ENCODE measurements at regions of chr6 and their contacts with region 1.

Region 1: GRCh38 chr6:30730601-30731435 is 10.7 kb downstream of the TUBB start:
- DNase-seq: peak; percentile 88
- H3K4me3 ChIP-seq: no peak overlapping the region
- H3K27ac ChIP-seq: no peak overlapping the region
- H3K4me1 ChIP-seq: peaks cover 5% of the 10 kb centered on the region
- H3K27me3 ChIP-seq: no peaks in the 10 kb centered on the region
- CTCF ChIP-seq: peak; percentile 81 to 95

Region 2: GRCh38 chr6:30664994-30665767 is 65.6 kb before region 1 on chr6:
- CTCF ChIA-PET with region 1: no interaction called
- dilution Hi-C with region 1: loop called (anchors 5 kb)
- in situ Hi-C with region 1: no loop called
- intact Hi-C with region 1: no loop called
- DNase-seq: no peak
- H3K4me3 ChIP-seq: no peak overlapping the region
- H3K27ac ChIP-seq: no peak overlapping the region
- H3K4me1 ChIP-seq: no peaks in the 10 kb centered on the region
- H3K27me3 ChIP-seq: no peaks in the 10 kb centered on the region
- CTCF ChIP-seq: no peak

Region 3: GRCh38 chr6:30821862-30822782 is 91.3 kb after region 1 on chr6:
- CTCF ChIA-PET with region 1: interaction called, 11 read pairs
- dilution Hi-C with region 1: no loop called
- in situ Hi-C with region 1: no loop called
- intact Hi-C with region 1: no loop called
- DNase-seq: peak; percentile 64
- H3K4me3 ChIP-seq: peak overlapping the region in 1 of 3 experiments; percentile 10
- H3K27ac ChIP-seq: peak overlapping the region; percentile 84
- H3K4me1 ChIP-seq: peaks cover 49% of the 10 kb centered on the region
- H3K27me3 ChIP-seq: no peaks in the 10 kb centered on the region
- CTCF ChIP-seq: peak; percentile 44 to 59

Region 4: DNA sequence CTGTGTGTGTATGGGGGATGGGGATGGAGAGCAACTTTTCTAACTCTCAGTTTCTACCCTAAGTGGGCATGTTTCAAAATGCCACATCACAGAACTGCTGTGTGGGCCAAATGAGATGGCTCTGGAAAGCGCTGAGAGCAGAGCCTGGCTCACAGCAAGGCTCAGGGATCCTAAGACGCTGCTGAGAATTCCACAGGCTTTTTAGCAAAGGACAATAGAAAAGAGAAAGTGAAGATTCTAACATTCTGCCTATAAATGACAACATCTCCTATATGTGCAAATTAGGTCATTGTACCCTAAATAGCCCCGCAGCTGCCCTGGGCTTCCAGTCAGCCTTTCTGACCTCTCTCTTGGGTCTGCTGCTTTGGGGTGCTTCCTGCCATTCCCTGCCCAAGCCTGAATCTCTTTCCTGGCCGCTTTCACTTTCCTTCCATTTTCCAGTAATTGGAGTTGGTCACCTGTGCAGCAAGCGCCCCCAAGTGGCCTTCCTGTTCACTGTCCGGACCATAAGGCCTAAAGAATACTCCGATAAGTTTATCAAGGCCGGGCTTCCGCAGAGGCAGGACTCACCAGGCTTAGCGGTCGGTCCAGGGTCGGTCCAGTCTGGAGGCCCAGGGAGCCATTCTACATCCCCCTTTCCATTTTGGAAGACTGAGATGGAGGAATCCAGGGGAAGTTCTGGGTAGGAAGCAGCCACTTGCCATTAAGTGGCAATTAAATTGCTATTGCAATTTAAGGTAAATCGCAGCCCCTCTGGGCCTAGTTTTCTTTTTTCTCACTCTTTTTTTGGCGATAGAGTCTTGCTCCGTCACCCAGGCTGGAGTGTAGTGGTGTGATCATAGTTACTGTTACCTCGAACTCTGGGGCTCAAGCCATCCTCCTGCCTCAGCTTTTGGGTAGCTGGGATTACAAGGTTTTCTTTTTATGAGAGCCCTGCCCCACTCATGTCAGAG is 146.9 kb after region 1 on chr6:
- CTCF ChIA-PET with region 1: no interaction called
- dilution Hi-C with region 1: no loop called
- in situ Hi-C with region 1: loop called in 1 of 2 experiments (anchors 5 kb)
- intact Hi-C with region 1: loop called (anchors 1 kb)
- DNase-seq: peak; percentile 80
- H3K4me3 ChIP-seq: peak overlapping the region in 2 of 3 experiments; percentile 13 to 20
- H3K27ac ChIP-seq: peak overlapping the region; percentile 63
- H3K4me1 ChIP-seq: peaks cover 37% of the 10 kb centered on the region
- H3K27me3 ChIP-seq: no peaks in the 10 kb centered on the region
- CTCF ChIP-seq: peak; percentile 92 to 96

Region 5: GRCh38 chr6:31128093-31128676 is 397.4 kb after region 1 on chr6:
- CTCF ChIA-PET with region 1: no interaction called
- dilution Hi-C with region 1: no loop called
- in situ Hi-C with region 1: no loop called
- intact Hi-C with region 1: loop called (anchors 5 kb)
- DNase-seq: peak; percentile 46
- H3K4me3 ChIP-seq: no peak overlapping the region
- H3K27ac ChIP-seq: no peak overlapping the region
- H3K4me1 ChIP-seq: peaks cover 38% of the 10 kb centered on the region
- H3K27me3 ChIP-seq: no peaks in the 10 kb centered on the region
- CTCF ChIP-seq: peak; percentile 82 to 90

Measured in mammary epithelial cell (primary cell).